Astrocyte of the cerebellum (primary cell): ENCODE measurements at regions of chr5 and their contacts with region 1.

Region 1: GRCh38 chr5:171724468-171725204 is 61.0 kb upstream of the SMIM23 start:
- DNase-seq: no peak
- H3K4me3 ChIP-seq: no peak overlapping the region
- CTCF ChIP-seq: no peak

Region 2: DNA sequence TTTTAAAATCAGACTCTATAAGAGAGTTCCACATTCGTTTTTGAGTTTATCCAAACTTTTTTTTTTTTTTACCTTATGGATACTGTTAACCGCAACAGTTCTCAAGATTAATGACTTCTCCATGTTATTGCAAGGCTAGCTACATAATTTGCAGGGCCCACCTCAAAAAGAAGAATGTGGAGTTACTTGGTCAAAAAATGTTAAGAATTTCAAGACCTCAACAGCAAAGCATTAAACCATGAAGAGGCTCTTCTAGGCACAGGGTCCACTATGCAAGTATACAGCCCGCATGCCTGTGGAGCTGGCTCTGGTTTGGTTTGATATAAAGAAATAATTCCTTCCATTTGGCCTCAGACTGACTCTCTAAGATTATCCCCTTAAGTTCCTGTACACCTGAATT is 548.9 kb before region 1 on chr5:
- in situ Hi-C with region 1: no loop called
- DNase-seq: no peak
- H3K4me3 ChIP-seq: no peak overlapping the region
- CTCF ChIP-seq: no peak

Region 3: DNA sequence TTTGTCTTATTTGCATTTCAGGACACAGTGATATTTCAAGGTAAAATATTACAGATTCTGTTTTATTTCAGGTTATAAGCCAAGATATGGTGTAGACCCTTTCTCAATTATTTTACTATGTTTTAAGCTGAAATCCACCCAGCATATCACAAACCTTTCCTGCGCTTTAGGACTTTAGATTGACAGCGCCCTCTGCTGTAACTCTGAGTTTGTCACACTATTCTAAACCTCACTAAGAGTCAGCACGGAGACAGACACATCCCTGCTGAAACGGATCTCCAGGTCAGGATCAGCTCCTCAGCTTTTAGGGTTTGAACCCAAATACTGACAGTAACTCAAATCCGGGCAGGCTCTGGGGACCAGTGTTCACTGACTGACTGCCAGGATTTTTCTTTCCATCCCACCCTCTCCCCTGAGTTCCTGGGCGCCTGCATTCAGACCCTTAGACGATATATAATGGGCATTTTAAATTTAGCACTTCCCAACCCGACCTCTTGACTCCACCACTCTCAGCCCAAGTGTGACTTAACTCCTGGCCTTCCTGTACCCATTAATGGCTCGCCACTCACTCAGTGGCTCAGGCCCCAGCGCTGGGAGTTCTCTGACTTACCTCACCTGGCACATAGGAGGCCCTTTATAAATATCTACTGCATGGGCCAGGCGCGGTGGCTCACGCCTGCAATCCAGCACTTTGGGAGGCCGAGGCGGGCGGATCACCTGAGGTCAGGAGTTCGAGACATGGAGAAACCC is 382.1 kb before region 1 on chr5:
- in situ Hi-C with region 1: no loop called
- DNase-seq: peak; percentile 52
- H3K4me3 ChIP-seq: no peak overlapping the region
- CTCF ChIP-seq: peak; percentile 78

Region 4: DNA sequence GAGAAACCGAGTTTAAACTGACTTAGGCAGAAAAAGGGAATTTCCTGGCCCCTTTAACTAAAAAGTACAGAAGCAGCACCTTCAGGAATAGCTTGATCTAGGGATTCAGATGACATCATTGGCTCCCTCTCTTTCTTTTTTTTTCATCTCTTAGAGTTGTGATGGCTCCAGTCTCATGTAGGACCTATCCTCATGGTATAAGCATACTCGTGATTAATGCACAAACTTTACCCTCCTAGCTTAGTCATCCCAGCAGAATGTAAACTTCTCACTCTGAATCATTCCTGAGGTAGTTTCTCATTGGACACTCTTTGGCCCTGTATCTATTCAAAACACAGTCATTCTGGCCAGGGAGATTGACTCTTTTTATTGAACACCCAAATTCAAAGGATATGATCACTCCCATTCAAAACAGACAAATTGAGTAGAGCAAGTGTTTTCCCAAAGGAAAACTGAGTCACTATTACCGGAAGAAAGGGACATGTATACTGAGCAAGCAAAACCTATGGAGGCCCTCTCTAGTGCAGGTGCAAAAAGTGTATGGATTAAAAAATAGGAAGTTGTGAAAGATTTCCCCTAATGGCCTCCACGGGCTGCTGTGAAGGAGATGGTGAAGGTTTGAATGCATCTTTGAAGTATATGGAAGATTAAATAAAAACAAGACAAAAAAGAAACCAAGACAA is 33.4 kb after region 1 on chr5:
- in situ Hi-C with region 1: loop called (anchors 5 kb)
- DNase-seq: peak; percentile 57
- H3K4me3 ChIP-seq: no peak overlapping the region
- CTCF ChIP-seq: no peak

Region 5: DNA sequence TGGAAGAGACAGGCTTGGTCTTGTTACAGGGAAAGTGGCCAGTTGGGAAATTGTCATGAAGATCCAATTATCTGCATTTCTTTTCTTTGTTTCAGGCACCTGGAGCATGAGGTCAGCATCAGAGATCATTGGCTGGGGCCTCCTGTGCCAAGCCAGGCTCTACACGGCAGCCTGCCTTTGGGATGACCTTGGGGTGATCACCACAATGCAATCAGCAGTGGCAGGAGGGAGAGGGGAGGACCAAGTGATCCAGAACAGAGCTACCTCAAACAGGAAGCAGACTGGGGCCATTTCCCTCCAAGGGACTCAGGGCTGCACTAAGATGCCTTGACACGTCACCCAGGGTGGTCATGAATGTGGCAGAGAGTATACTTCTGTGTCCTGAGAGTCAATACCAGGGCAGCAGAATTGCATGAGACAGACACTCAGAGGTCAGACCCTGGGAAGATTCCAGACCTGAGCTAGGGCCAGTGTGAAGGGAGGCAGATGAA is 69.9 kb after region 1 on chr5:
- in situ Hi-C with region 1: loop called (anchors 5 kb)
- DNase-seq: no peak
- H3K4me3 ChIP-seq: no peak overlapping the region
- CTCF ChIP-seq: no peak